Activated T-helper 1 cell treated with anti-CD3 and anti-CD28 coated beads, Interleukin-12 subunit alpha, Interleukin-12 subunit beta, Interleukin-2, Interleukin-4 antibody, amounts not matched to agents 30 ng/mL and 10 ng/mL and 1 ng/mL, durations not matched to agents 14 hours and 24 hours and 36 hours (primary cell): ENCODE measurements at regions of chrX and their contacts with region 1.

Region 1: DNA sequence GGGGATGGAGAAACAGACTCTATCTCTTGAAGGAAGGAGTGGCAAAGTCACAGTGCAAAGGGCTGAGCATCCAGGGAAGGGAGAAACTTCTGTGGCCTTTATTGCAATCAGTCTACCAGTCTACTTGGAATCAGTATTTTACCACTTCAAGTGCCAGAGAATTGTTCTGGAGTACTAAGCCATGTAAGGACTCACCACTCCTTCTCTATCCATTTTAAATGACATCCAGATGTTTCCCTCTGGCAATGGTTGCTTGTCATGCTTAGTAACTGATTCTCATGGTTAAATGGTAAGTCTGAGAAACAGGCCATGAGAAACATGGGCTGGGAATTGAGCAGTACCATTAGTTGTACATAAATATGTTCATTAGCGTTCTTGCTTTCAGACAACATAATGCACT is 21.1 kb upstream of the SMIM10 start:
- DNase-seq: no peak
- H3K4me3 Mint-ChIP-seq: no peak overlapping the region
- H3K27ac Mint-ChIP-seq: no peak overlapping the region
- H3K4me1 Mint-ChIP-seq: no peaks in the 10 kb centered on the region
- H3K27me3 Mint-ChIP-seq: peaks cover 10% of the 10 kb centered on the region

Region 2: DNA sequence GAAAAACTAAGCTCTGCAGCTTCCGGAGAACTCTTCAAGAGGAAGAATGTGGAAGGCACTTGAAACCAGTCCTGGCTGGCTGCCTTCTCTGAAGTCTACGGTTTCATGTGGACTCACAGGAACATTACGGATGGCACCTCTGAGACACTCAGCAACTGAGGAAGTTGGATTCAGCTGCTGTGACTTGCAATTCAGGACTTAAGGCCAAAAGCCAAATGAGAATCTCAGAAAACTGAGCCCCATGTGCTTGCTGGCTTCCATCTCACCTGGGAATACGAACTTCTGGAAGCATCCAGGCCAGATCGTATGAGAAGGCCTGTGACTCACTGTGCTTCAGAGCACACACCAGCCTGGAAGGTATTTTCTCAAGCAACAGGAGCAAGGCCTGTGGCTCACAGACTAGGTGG is 1446.6 kb before region 1 on chrX:
- intact Hi-C with region 1: no loop called
- DNase-seq: no peak
- H3K4me3 Mint-ChIP-seq: no peak overlapping the region
- H3K27ac Mint-ChIP-seq: no peak overlapping the region
- H3K4me1 Mint-ChIP-seq: no peaks in the 10 kb centered on the region
- H3K27me3 Mint-ChIP-seq: peaks cover 1% of the 10 kb centered on the region

Region 3: GRCh38 chrX:134692990-134693389 is 276.7 kb before region 1 on chrX:
- intact Hi-C with region 1: no loop called
- DNase-seq: no peak
- H3K4me3 Mint-ChIP-seq: no peak overlapping the region
- H3K27ac Mint-ChIP-seq: no peak overlapping the region
- H3K4me1 Mint-ChIP-seq: no peaks in the 10 kb centered on the region
- H3K27me3 Mint-ChIP-seq: no peaks in the 10 kb centered on the region

Region 4: GRCh38 chrX:135003876-135004623 is 34.3 kb after region 1 on chrX:
- intact Hi-C with region 1: loop called (anchors 1 kb)
- DNase-seq: peak; percentile 87
- H3K4me3 Mint-ChIP-seq: peak overlapping the region; percentile 87
- H3K27ac Mint-ChIP-seq: peak overlapping the region; percentile 62
- H3K4me1 Mint-ChIP-seq: peaks cover 14% of the 10 kb centered on the region
- H3K27me3 Mint-ChIP-seq: peaks cover under 1% of the 10 kb centered on the region

Region 5: DNA sequence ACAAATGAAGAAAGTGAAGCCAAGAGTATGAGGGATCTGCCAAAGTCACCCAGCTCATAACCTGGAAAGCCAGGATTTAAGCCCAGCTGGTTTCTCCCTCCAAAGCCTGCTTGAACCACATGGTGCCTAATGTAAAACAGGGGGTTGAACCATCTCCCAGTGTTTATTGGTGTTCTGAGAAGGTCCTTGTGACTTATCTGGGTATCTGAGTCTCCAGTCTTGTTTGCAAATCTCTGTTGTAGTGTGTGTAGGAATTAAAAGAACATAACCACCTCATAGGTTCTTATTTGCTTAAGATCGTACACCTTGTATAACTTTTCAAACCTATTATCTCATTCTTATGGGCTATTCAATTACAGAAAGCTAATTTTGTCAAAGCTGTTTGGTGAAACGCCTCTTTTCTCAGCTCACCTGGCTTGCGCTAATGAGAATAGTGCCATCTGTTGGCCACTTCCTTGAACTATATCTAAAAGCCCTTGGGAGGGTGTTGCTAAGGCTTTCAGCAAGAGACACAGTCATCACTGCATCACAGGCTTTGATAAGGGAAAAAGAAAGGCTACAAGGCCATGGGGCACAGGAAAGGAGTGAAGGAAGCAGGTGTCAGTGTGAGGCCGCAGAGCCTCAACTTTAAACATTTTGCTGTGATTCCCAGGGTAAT is 116.6 kb after region 1 on chrX:
- intact Hi-C with region 1: loop called (anchors 1 kb)
- DNase-seq: peak; percentile 35
- H3K4me3 Mint-ChIP-seq: no peak overlapping the region
- H3K27ac Mint-ChIP-seq: no peak overlapping the region
- H3K4me1 Mint-ChIP-seq: peaks cover 8% of the 10 kb centered on the region
- H3K27me3 Mint-ChIP-seq: no peaks in the 10 kb centered on the region

Region 6: DNA sequence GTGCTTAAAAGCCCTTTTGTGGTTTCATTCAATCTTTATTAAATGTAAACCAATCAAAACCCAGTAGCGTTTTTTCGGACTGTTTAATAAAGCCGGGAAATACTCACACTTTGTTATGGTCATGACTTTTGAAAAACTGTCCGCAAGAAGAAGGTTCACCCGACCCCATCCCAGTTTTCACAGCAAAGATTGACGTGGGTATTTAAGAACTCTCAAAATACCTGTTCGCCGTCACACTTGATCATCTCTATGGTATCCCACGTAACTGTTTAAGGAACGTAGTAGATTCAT is 129.7 kb after region 1 on chrX:
- intact Hi-C with region 1: no loop called
- DNase-seq: no peak
- H3K4me3 Mint-ChIP-seq: peak overlapping the region; percentile 72
- H3K27ac Mint-ChIP-seq: no peak overlapping the region
- H3K4me1 Mint-ChIP-seq: peaks cover 6% of the 10 kb centered on the region
- H3K27me3 Mint-ChIP-seq: peaks cover 43% of the 10 kb centered on the region

Region 7: GRCh38 chrX:135477576-135477975 is 507.9 kb after region 1 on chrX:
- intact Hi-C with region 1: loop called (anchors 5 kb)
- DNase-seq: peak; percentile 2
- H3K4me3 Mint-ChIP-seq: no peak overlapping the region
- H3K27ac Mint-ChIP-seq: no peak overlapping the region
- H3K4me1 Mint-ChIP-seq: peaks cover 5% of the 10 kb centered on the region
- H3K27me3 Mint-ChIP-seq: peaks cover 3% of the 10 kb centered on the region